OCI-LY7 (cell line): ENCODE measurements at regions of chr18 and their contacts with region 1.

Region 1: DNA sequence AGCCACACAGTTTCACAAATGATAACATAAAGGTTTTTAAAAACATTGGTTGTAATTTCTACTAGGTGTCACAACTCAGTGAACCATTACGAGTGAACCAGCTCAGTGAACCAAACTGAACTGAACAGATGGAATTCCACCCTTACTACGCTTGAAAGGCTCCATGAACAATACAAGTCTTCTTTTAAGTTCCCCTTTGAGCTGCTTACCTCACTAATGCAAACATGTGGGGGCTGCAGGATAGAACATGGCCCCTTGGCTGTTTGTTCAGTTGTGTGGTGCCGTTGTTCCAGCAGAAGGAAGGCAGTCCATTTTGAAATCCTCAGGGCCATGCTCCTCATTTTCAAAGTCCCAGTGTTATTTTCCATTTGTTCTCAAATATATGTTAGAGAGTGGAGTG is 30.7 kb upstream of the KLHL14 start:
- DNase-seq: peak; percentile 90
- H3K4me3 ChIP-seq: peak overlapping the region; percentile 58
- H3K27ac ChIP-seq: peak overlapping the region; percentile 97
- H3K4me1 ChIP-seq: peaks cover 61% of the 10 kb centered on the region
- CTCF ChIP-seq: no peak

Region 2: DNA sequence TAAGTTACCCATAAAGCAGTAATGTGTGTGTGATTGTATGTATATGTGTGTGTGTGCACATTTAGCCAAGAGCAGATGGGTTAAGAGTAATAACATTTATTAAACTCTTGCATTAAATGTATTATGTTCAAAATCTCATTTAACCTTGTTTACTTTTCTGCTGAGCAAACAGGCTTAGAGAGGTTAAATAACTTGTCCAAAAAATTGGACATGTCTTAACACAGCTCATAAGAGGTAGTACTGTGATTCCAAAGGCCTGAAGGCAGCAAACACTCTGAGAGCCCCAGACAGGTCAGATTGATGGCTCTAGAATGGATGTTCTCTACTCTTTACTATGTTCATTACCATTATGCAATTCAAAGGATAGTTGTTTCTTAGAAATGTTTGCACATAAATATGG is 211.2 kb before region 1 on chr18:
- CTCF ChIA-PET with region 1: no interaction called
- POLR2A ChIA-PET with region 1: no interaction called
- intact Hi-C with region 1: no loop called
- DNase-seq: no peak
- H3K4me3 ChIP-seq: no peak overlapping the region
- H3K27ac ChIP-seq: no peak overlapping the region
- H3K4me1 ChIP-seq: no peaks in the 10 kb centered on the region
- CTCF ChIP-seq: no peak

Region 3: DNA sequence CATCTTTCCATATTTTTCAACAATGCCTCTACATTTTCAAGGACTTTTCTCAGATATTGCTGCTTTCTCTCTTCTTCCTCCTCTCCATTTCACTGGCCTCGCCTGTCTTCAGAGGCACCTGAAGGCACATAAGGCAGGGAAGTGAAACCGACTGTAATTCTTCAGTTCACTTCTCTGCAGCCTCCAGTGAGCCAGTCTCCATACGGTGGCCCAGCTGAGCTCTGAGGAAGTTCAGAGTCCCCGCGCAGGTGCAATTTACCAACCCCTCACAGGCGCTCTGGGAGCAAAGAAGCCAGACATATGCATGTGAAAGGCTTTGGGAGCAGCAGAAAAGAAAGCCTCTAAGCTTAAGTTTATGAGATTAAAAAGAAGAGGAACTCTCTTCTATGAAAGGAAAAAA is 43.2 kb before region 1 on chr18:
- CTCF ChIA-PET with region 1: no interaction called
- POLR2A ChIA-PET with region 1: interaction called, 4 read pairs
- intact Hi-C with region 1: loop called (anchors 1 kb)
- DNase-seq: peak; percentile 91
- H3K4me3 ChIP-seq: peak overlapping the region; percentile 41
- H3K27ac ChIP-seq: peak overlapping the region; percentile 75
- H3K4me1 ChIP-seq: peaks cover 53% of the 10 kb centered on the region
- CTCF ChIP-seq: no peak

Region 4: DNA sequence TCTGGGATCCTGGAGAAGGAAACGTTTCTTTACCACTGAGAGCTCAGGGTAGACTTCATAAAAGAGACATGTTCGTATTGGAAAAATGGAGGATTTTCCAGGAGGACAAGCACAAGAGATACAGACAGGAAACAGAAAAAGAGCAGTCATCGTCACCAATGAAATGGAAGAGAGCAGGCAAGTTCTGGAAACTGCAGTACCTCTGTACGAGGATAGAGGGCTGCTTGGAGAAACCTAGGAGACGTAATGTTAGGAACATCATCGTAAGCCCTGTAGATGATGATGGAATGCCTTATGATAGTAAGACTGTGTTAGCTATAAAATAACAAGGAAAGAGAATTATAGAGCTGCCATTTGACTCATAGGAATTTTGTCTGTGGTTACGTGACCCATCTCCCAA is 90.3 kb after region 1 on chr18:
- CTCF ChIA-PET with region 1: no interaction called
- POLR2A ChIA-PET with region 1: no interaction called
- intact Hi-C with region 1: no loop called
- DNase-seq: no peak
- H3K4me3 ChIP-seq: no peak overlapping the region
- H3K27ac ChIP-seq: no peak overlapping the region
- H3K4me1 ChIP-seq: peaks cover 7% of the 10 kb centered on the region
- CTCF ChIP-seq: peak; percentile 34; the same call in 1 of the 2 replicates

Region 5: DNA sequence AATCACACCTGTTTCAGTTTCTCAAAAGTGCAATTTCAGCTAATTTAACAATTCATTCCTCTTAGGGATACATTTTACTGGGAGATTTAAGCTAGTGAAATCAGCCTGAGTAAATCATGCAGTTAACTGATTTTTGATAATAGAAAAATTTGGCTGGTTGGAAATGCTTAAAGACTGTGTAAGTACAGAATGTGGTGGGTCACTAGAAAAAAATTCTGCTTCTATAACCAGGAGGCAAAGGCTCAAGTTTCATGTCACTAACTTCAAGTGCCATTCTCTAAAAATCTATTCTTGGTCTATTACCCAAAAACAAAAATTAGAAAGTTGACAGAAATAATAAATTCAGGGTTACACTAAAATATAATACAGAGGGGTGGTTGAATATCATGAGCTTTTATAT is 365.6 kb after region 1 on chr18:
- CTCF ChIA-PET with region 1: no interaction called
- POLR2A ChIA-PET with region 1: no interaction called
- intact Hi-C with region 1: no loop called
- DNase-seq: no peak
- H3K4me3 ChIP-seq: no peak overlapping the region
- H3K27ac ChIP-seq: no peak overlapping the region
- H3K4me1 ChIP-seq: no peaks in the 10 kb centered on the region
- CTCF ChIP-seq: no peak

Region 6: GRCh38 chr18:33854086-33854826 is 1050.7 kb after region 1 on chr18:
- CTCF ChIA-PET with region 1: no interaction called
- POLR2A ChIA-PET with region 1: no interaction called
- intact Hi-C with region 1: loop called (anchors 5 kb)
- DNase-seq: peak; percentile 81
- H3K4me3 ChIP-seq: peak overlapping the region; percentile 74
- H3K27ac ChIP-seq: peak overlapping the region; percentile 100
- H3K4me1 ChIP-seq: peaks cover 64% of the 10 kb centered on the region
- CTCF ChIP-seq: no peak